Activated CD4-positive, alpha-beta T cell treated with anti-CD3 and anti-CD28 coated beads for 36 hours (primary cell): ENCODE measurements at regions of chr1 and their contacts with region 1.

Region 1: DNA sequence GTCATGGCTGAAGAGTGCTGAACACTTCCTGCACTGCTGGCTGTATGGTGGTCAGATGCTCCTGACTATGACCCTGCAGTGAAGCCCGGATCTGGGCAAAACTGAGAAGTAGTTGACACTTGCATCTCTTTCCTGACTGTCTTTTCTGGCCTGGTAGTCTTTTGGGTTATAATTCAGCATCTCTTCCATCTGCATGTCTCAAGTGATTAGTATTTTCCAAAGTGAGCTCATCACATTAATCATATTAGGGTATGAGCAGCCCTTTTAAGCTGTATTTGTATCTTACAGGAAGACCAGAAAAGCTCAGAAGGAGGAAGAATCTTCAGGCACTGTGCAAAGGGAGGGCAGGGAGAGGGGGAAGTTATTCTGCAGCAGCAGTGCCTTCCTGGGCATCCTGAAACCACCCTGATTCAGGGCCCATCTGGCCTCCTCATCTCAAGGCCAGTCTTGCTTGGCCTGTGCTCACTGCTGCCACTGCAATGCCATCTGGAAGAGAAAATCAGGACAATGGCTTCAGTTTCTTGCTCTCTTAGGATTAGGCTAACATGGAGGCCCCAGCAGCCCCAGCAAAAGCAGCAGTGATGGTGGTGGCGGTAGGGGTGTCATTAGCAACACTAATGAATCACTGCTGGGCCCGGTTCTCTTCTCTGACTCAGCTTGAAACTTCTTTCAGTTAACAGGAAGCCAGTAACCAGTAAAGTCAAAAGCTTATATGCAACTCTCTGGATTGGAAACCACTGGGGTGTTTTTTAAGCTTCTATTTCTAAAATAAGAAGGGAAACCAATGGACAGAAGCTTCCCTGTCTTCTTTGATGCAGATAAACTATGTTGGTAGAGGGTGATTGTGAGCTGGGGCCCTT is 63.3 kb upstream of the WDR26 start:
- DNase-seq: peak; percentile 88
- ATAC-seq: peak; percentile 97
- H3K4me3 Mint-ChIP-seq: peak overlapping the region; percentile 44
- H3K27ac Mint-ChIP-seq: peak overlapping the region; percentile 96
- H3K4me1 Mint-ChIP-seq: peaks cover 42% of the 10 kb centered on the region
- H3K27me3 Mint-ChIP-seq: no peaks in the 10 kb centered on the region

Region 2: DNA sequence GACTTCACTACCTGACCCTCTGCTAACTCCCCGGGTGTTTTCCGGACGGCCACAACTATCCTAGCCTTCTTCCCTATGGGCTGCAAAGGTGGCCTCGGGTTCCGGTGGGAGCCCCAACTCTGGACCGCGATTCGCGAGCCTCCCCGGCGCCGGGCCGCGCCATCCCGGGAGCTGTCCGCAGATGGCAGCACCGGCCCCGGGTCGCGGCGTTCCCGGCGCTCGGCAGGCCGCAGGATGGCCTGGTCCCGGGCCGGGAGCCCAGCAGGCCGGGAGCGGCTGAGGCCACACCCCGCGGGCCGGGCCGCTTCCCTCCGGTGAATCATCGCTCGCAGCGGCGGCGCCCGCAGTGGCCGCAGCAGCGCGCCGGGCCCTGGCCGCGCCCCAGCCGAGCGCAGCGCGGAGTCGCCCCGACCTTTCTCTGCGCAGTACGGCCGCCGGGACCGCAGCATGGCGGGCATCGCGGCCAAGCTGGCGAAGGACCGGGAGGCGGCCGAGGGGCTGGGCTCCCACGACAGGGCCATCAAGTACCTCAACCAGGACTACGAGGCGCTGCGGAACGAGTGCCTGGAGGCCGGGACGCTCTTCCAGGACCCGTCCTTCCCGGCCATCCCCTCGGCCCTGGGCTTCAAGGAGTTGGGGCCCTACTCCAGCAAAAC is 785.6 kb before region 1 on chr1 and contains the start of gene CAPN2:
- CTCF ChIA-PET with region 1: no interaction called
- POLR2A ChIA-PET with region 1: no interaction called
- intact Hi-C with region 1: loop called in 1 of 2 experiments (anchors 5 kb)
- DNase-seq: peak; percentile 76
- ATAC-seq: peak; percentile 47
- H3K4me3 Mint-ChIP-seq: peak within 1 kb of the TSS; percentile 80
- H3K27ac Mint-ChIP-seq: peak within 1 kb of the TSS; percentile 82
- H3K4me1 Mint-ChIP-seq: peaks cover 62% of the 10 kb centered on the region
- H3K27me3 Mint-ChIP-seq: no peaks in the 10 kb centered on the region
- total RNA-seq, gene CAPN2: 31.1 to 33.1 TPM

Region 3: GRCh38 chr1:224377676-224378006 is 120.3 kb before region 1 on chr1:
- CTCF ChIA-PET with region 1: no interaction called
- POLR2A ChIA-PET with region 1: interaction called, 4 read pairs
- intact Hi-C with region 1: loop called in 1 of 2 experiments (anchors 5 kb)
- DNase-seq: peak; percentile 56
- ATAC-seq: peak; percentile 68
- H3K4me3 Mint-ChIP-seq: no peak overlapping the region
- H3K27ac Mint-ChIP-seq: peak overlapping the region; percentile 82
- H3K4me1 Mint-ChIP-seq: peaks cover 94% of the 10 kb centered on the region
- H3K27me3 Mint-ChIP-seq: no peaks in the 10 kb centered on the region

Region 4: DNA sequence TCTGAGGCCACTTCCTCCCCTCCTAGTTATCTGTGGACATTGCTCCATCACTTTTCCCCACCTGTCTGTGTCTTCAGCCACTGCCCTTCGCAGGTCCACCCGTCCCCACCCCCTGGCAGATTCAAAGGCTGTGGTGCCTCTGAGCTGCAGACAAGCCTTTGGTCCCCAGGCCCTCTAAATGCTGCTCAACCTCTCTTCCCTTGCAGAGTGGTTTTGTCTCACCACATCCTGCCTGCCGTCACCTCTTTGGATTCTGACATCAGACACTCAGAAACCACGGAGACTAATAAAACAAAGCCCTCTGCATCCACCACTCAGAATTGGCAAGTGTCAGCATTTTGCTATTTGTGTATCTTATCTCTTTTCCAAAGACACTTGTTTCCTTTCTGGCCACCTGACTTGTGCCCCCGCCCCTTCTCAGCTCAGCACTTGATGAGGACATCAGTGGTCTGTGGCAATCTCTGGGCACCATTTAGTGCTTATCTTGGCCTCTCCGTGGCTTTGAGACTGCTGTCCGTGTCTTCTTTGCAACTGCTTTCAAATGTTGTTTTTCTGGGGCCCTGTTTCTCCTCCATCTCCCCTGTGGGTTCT is 125.9 kb after region 1 on chr1:
- CTCF ChIA-PET with region 1: interaction called, 3 read pairs
- POLR2A ChIA-PET with region 1: no interaction called
- intact Hi-C with region 1: loop called in 1 of 2 experiments (anchors 5 kb)
- DNase-seq: peak; percentile 87
- ATAC-seq: peak; percentile 92
- H3K4me3 Mint-ChIP-seq: peak overlapping the region; percentile 45
- H3K27ac Mint-ChIP-seq: peak overlapping the region; percentile 96
- H3K4me1 Mint-ChIP-seq: peaks cover 25% of the 10 kb centered on the region
- H3K27me3 Mint-ChIP-seq: peaks cover 25% of the 10 kb centered on the region

Region 5: DNA sequence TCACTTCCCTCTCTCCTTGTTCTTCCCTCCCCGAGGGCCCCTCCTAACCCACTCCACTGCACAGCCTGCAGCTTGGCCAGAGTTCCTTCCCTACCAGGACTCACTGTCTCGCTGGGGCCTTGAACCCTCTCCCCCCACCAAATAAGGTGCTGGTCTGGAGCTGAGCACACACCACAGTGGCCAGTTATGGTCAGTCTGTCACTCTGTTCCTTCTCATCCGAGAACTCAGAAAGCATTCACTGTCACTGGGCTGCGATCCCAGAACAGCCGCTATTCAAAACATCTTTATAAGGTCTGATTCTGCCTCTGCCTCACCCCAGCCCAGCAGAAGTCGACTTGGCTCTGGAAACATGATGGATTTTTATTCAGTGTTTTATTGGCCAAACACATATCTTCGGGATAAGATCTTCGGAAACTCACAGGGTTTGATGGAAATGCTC is 949.7 kb after region 1 on chr1:
- CTCF ChIA-PET with region 1: no interaction called
- POLR2A ChIA-PET with region 1: no interaction called
- intact Hi-C with region 1: loop called in 1 of 2 experiments (anchors 5 kb)
- DNase-seq: peak; percentile 1
- ATAC-seq: no peak
- H3K4me3 Mint-ChIP-seq: no peak overlapping the region
- H3K27ac Mint-ChIP-seq: peak overlapping the region; percentile 21
- H3K4me1 Mint-ChIP-seq: peaks cover 55% of the 10 kb centered on the region
- H3K27me3 Mint-ChIP-seq: no peaks in the 10 kb centered on the region